ENCODE measurements at regions of chr2 and their contacts with region 1.

Region 1: DNA sequence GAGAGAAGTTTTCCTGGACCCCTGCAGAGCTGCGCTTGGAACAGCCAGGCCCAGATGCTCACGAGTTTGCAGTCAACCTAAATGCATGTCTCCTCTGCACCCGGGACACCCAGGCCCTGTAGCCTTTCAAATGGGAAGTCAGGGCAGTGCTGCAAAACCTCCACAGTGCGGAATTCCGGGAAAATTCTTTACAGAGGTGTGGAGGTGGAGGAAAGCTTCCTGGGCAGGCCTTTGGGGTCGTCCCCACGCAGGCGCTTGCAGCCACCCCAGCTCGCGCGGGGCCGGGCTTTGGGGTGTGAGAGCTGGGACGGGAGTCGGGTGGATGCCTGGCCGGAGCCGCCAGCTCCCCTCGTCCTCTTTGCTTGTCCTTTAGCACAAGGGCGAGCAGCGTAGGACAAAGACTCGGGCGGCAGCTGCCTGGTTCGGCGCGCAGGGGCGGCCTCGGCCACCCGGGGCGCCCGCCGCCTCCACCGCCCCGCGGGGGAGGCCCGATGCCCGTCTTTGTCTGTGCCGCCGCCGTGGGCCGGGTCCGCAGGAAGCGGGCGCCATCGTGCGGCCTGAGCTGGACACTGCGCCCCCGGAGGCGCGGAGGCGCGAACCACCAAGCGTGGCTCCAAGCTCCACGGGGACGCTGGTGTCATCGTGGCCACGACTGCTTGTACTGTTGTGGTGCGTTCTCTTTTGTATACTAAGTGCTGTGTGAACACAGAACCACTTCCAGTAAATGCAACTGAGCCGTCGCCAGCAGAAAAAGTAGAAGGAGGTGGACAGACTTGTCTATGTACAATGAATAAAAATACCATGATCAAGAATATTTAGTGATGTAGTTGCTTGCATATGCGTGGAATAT is 28.2 kb upstream of the BCL11A start:
- DNase-seq: peak; percentile 81
- H3K4me3 Mint-ChIP-seq: peak overlapping the region; percentile 40
- H3K27ac Mint-ChIP-seq: no peak overlapping the region
- H3K4me1 Mint-ChIP-seq: no peaks in the 10 kb centered on the region
- H3K27me3 Mint-ChIP-seq: peaks cover 74% of the 10 kb centered on the region
- CTCF ChIP-seq: peak; percentile 91

Region 2: GRCh38 chr2:60347781-60348180 is 233.9 kb before region 1 on chr2:
- CTCF ChIA-PET with region 1: no interaction called
- intact Hi-C with region 1: no loop called
- DNase-seq: no peak
- H3K4me3 Mint-ChIP-seq: no peak overlapping the region
- H3K27ac Mint-ChIP-seq: no peak overlapping the region
- H3K4me1 Mint-ChIP-seq: no peaks in the 10 kb centered on the region
- H3K27me3 Mint-ChIP-seq: peaks cover 28% of the 10 kb centered on the region
- CTCF ChIP-seq: no peak

Region 3: DNA sequence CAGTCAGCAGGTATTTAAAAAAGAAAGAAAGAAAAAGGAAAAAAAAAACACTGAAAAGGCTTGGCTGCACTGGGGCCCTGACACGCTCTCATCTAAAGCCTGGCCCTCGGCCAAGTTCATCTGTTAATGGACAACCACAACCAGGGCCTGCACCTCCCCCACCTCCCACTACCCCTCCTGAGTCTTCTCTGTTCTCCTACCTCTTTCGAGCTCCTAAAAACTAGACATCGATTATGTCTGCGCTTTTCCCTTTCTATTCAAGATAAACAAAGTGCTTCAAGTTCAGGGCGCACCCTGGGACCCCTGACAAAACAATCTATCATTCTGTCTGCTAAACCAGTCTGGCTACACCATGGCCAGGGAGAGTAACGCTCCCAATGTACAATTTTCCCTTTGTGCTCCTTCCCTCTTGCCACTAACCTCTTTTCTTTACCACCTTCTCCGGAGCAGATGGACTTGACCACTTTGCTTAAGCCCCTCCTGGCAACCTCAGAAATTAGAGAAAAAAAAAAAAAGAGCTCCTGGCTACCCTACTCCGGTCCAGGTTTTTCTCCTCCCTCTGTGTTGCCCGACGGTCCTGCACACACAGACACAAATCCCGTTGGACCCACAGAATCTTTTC is 50.9 kb before region 1 on chr2:
- CTCF ChIA-PET with region 1: no interaction called
- intact Hi-C with region 1: loop called (anchors 2 kb)
- DNase-seq: peak; percentile 84
- H3K4me3 Mint-ChIP-seq: peak overlapping the region; percentile 55
- H3K27ac Mint-ChIP-seq: peak overlapping the region; percentile 32
- H3K4me1 Mint-ChIP-seq: peaks cover 38% of the 10 kb centered on the region
- H3K27me3 Mint-ChIP-seq: peaks cover 82% of the 10 kb centered on the region
- CTCF ChIP-seq: no peak

Region 4: GRCh38 chr2:60569680-60570111 is 12.0 kb before region 1 on chr2:
- CTCF ChIA-PET with region 1: interaction called, 11 read pairs
- intact Hi-C with region 1: no loop called
- DNase-seq: no peak
- H3K4me3 Mint-ChIP-seq: no peak overlapping the region
- H3K27ac Mint-ChIP-seq: no peak overlapping the region
- H3K4me1 Mint-ChIP-seq: no peaks in the 10 kb centered on the region
- H3K27me3 Mint-ChIP-seq: peaks cover 35% of the 10 kb centered on the region
- CTCF ChIP-seq: no peak

Measured in Calu3 (cell line).